AG04450 (cell line): ENCODE measurements at regions of chr11 and their contacts with region 1.

Region 1: DNA sequence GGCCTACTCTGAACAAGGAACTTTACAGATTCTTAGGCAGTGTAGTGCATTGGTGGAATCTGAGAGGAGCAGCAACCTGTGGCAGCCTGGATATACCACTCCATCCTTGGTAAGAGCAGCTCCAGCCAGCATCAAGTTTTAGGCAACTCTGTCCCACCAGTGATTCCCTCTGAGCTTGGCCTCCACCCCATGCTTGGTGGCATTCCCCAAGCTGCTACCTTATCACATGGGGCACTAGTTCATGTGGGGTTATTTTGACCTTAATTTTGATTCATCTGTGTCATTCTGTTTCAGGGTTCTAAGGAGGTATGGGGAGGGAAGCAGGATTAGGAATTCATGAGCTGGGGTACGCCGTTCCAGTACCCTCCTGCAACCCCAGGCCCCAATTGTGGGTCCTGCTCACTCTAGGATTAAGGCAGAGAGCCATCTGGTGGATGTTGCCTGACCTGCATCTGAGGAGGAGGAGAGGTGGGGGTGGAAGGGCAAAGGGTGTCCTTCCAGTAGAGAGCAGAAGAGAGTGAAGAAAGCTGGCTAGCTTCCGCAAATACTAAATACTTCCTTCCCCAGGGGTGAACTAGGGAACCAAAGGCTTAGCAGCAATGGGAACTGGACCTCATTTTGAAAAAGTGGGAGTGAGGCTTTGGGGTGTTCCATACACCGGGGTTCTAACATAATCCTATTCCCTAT is 10.5 kb downstream of the LRRC51 start:
- DNase-seq: peak; percentile 20
- H3K4me3 ChIP-seq: no peak overlapping the region
- H3K27ac ChIP-seq: no peak overlapping the region
- H3K27me3 ChIP-seq: no peaks in the 10 kb centered on the region
- CTCF ChIP-seq: peak; percentile 90

Region 2: DNA sequence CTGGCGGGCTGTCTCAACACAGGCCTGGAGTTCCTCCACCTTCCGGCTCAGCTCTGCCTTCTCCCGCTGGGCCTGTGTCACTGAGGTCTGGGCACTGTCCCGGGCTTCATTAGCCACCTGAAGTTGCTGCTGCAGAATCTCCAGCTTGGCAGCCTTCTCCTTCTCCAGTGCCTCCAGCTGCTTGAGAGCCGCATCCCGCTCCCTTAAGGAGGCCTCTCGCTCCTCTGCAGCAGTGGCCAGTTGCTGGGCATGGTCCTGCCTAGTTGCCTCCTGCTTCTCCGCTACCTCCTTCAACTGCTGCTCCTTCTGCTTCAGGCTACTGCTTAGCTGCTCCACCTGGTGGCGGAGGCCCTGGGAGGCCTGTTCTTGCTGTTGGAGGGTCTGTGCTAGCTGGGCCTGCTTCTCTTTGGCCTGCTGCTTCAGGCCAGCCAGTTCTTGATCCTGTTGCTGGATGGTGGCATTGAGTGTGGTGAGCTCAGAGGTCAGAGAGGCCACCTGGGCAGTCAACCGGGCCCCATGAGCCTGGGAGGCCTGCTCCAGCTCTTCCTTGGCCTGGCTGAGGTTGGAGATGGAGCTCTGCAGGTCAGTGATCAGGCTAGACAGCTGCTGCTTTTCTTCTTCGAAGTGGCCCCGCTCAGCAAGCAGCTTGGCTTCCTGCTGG is 75.5 kb before region 1 on chr11:
- CTCF ChIA-PET with region 1: interaction called, 261 read pairs
- POLR2A ChIA-PET with region 1: interaction called, 3 read pairs
- DNase-seq: no peak
- H3K4me3 ChIP-seq: no peak overlapping the region
- H3K27ac ChIP-seq: no peak overlapping the region
- H3K27me3 ChIP-seq: no peaks in the 10 kb centered on the region
- CTCF ChIP-seq: peak; percentile 48

Region 3: GRCh38 chr11:72030472-72031045 is 60.6 kb before region 1 on chr11:
- CTCF ChIA-PET with region 1: interaction called, 261 read pairs
- POLR2A ChIA-PET with region 1: interaction called, 4 read pairs
- DNase-seq: no peak
- H3K4me3 ChIP-seq: no peak overlapping the region
- H3K27ac ChIP-seq: no peak overlapping the region
- H3K27me3 ChIP-seq: no peaks in the 10 kb centered on the region
- CTCF ChIP-seq: no peak

Region 4: GRCh38 chr11:72058416-72059034 is 32.6 kb before region 1 on chr11:
- CTCF ChIA-PET with region 1: interaction called, 10 read pairs
- POLR2A ChIA-PET with region 1: no interaction called
- DNase-seq: peak; percentile 59
- H3K4me3 ChIP-seq: no peak overlapping the region
- H3K27ac ChIP-seq: peak overlapping the region; percentile 87
- H3K27me3 ChIP-seq: no peaks in the 10 kb centered on the region
- CTCF ChIP-seq: no peak

Region 5: GRCh38 chr11:72102946-72103753 is 12.0 kb after region 1 on chr11 and contains the start of gene LAMTOR1:
- CTCF ChIA-PET with region 1: interaction called, 33 read pairs
- POLR2A ChIA-PET with region 1: interaction called, 3 read pairs
- DNase-seq: peak; percentile 98
- H3K4me3 ChIP-seq: peak within 1 kb of the TSS; percentile 82
- H3K27ac ChIP-seq: peak within 1 kb of the TSS; percentile 90
- H3K27me3 ChIP-seq: no peaks in the 10 kb centered on the region
- CTCF ChIP-seq: peak; percentile 46
- polyA plus RNA-seq, gene LAMTOR1: 89.1 and 120 TPM in 2 replicates

Region 6: DNA sequence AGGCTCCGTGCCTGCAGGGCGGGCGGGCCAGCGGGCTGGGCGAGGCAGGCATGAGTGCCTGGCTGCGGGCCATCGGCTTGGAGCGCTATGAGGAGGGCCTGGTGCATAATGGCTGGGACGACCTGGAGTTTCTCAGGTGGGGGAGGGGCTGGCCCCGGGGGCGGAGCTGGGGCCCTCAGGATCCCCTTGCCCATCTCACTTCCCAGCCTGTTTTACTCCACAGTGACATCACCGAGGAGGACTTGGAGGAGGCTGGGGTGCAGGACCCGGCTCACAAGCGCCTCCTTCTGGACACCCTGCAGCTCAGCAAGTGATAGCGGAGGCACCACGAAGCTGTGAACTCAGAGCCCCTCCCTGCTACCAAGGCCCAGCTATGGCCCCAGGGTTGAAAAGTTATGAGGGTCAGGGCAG is 146.9 kb after region 1 on chr11:
- CTCF ChIA-PET with region 1: no interaction called
- POLR2A ChIA-PET with region 1: no interaction called
- DNase-seq: no peak
- H3K4me3 ChIP-seq: no peak overlapping the region
- H3K27ac ChIP-seq: no peak overlapping the region
- H3K27me3 ChIP-seq: peaks cover 27% of the 10 kb centered on the region
- CTCF ChIP-seq: peak; percentile 79

Region 7: DNA sequence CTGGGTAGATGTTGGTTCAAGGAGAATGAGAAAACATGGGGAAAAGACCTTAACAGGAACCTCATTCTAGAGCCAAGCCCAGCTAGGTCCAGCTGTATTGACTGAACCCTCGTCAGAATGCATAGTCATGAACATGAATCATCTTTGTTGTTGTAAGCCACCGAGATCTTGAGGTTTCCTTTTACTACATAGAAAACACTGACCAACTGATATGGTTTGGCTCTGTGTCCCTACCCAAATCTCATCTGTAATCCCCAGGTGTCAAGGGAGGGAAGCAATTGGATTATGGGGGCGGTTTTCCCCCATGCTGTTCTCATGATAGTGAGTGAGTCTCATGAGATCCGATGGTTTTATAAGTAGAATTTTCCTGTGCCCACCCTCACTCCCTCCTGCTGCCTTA is 172.2 kb after region 1 on chr11:
- CTCF ChIA-PET with region 1: no interaction called
- POLR2A ChIA-PET with region 1: no interaction called
- DNase-seq: peak; percentile 20
- H3K4me3 ChIP-seq: no peak overlapping the region
- H3K27ac ChIP-seq: no peak overlapping the region
- H3K27me3 ChIP-seq: peaks cover 3% of the 10 kb centered on the region
- CTCF ChIP-seq: no peak